Calu3 (cell line): ENCODE measurements at regions of chr7 and their contacts with region 1.

Region 1: DNA sequence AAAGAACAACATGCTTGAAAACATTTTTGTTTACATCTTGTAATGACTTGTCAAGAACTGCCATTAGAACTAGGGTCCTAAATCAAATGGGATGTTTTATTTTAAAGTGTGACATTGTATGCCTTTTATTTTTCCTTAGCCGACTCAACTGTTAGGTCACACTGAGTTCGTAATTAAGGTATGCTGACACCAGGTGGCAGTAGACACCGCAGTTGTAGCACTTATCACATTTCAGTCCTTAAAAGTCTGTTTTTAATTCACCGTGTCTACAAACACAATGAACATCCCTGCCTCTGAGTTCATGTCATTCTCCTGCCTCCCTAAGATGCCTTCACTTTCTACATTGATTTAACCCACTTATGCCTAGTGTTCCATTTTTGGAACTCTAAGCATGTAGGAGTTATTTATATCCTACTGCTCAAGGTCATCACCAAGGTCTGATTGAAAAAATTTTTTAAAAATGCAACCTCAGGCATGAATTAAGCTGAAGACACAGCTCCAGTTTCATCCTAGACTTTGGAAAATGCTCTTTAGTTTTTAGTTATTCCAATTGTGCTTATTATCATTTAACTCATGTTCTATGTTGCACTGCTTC is 186.1 kb downstream of the BMPER start:
- DNase-seq: peak; percentile 66
- H3K4me3 Mint-ChIP-seq: no peak overlapping the region
- H3K27ac Mint-ChIP-seq: no peak overlapping the region
- H3K4me1 Mint-ChIP-seq: no peaks in the 10 kb centered on the region
- H3K27me3 Mint-ChIP-seq: peaks cover 18% of the 10 kb centered on the region
- CTCF ChIP-seq: peak; percentile 61

Region 2: GRCh38 chr7:33757562-33758165 is 333.8 kb before region 1 on chr7:
- CTCF ChIA-PET with region 1: no interaction called
- intact Hi-C with region 1: loop called (anchors 10 kb)
- DNase-seq: peak; percentile 53
- H3K4me3 Mint-ChIP-seq: no peak overlapping the region
- H3K27ac Mint-ChIP-seq: no peak overlapping the region
- H3K4me1 Mint-ChIP-seq: no peaks in the 10 kb centered on the region
- H3K27me3 Mint-ChIP-seq: peaks cover 84% of the 10 kb centered on the region
- CTCF ChIP-seq: peak; percentile 83

Region 3: DNA sequence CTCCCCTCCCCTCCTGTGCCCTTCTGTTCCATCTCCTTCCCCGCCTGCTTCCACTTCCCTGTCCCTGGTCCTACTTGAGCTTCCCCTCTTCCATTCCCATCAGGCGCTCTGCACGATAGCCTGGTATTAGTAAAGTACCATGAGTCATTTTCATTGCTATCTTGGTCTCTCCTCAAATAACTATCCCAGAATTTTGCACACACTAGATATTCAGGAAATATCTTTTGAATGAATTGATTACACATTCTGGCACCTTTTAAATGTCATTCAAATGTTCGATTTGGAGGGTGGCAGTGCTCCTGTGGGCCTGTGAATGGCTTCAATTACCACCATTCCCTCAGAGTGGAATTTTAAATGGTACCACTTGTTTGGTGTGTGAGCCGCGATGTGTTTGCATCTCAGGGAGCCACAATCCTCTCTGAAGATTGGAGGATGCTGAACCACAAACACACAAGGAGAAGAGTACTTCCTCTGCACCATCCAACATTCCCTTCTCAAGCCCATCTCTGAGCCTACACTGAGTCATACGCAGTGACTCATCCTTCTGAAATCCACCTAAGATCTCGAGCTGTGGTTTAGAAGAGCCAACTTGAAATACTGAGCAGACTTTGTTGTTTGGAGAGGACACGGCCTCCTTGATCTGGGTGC is 104.4 kb before region 1 on chr7:
- CTCF ChIA-PET with region 1: interaction called, 162 read pairs
- intact Hi-C with region 1: loop called (anchors 1 kb)
- DNase-seq: peak; percentile 75
- H3K4me3 Mint-ChIP-seq: no peak overlapping the region
- H3K27ac Mint-ChIP-seq: peak overlapping the region; percentile 32
- H3K4me1 Mint-ChIP-seq: peaks cover 23% of the 10 kb centered on the region
- H3K27me3 Mint-ChIP-seq: peaks cover under 1% of the 10 kb centered on the region
- CTCF ChIP-seq: no peak

Region 4: GRCh38 chr7:34165929-34166550 is 74.6 kb after region 1 on chr7:
- CTCF ChIA-PET with region 1: no interaction called
- intact Hi-C with region 1: loop called (anchors 1 kb)
- DNase-seq: peak; percentile 22
- H3K4me3 Mint-ChIP-seq: no peak overlapping the region
- H3K27ac Mint-ChIP-seq: no peak overlapping the region
- H3K4me1 Mint-ChIP-seq: no peaks in the 10 kb centered on the region
- H3K27me3 Mint-ChIP-seq: peaks cover 36% of the 10 kb centered on the region
- CTCF ChIP-seq: peak; percentile 50

Region 5: GRCh38 chr7:34430458-34430857 is 339.0 kb after region 1 on chr7:
- CTCF ChIA-PET with region 1: no interaction called
- intact Hi-C with region 1: loop called (anchors 5 kb)
- DNase-seq: peak; percentile 83
- H3K4me3 Mint-ChIP-seq: no peak overlapping the region
- H3K27ac Mint-ChIP-seq: no peak overlapping the region
- H3K4me1 Mint-ChIP-seq: peaks cover 14% of the 10 kb centered on the region
- H3K27me3 Mint-ChIP-seq: peaks cover 9% of the 10 kb centered on the region
- CTCF ChIP-seq: peak; percentile 78

Region 6: GRCh38 chr7:34596892-34597291 is 505.5 kb after region 1 on chr7:
- CTCF ChIA-PET with region 1: interaction called, 3 read pairs
- intact Hi-C with region 1: loop called (anchors 2 kb)
- DNase-seq: peak; percentile 40
- H3K4me3 Mint-ChIP-seq: no peak overlapping the region
- H3K27ac Mint-ChIP-seq: no peak overlapping the region
- H3K4me1 Mint-ChIP-seq: no peaks in the 10 kb centered on the region
- H3K27me3 Mint-ChIP-seq: no peaks in the 10 kb centered on the region
- CTCF ChIP-seq: peak; percentile 65